ENCODE measurements at regions of chr6 and their contacts with region 1.

Region 1: GRCh38 chr6:21593412-21593926 is at the start of gene SOX4:
- DNase-seq: peak; percentile 95 to 98 (median 97)
- H3K4me3 ChIP-seq: peak within 1 kb of the TSS; percentile 85
- H3K27ac ChIP-seq: peak within 1 kb of the TSS; percentile 83 to 87
- H3K4me1 ChIP-seq: no peaks in the 10 kb centered on the region
- H3K27me3 ChIP-seq: no peaks in the 10 kb centered on the region
- CTCF ChIP-seq: no peak
- EP300 ChIP-seq: no peak
- POLR2A ChIP-seq: peak; percentile 81
- total RNA-seq, gene SOX4: 34.4 to 78.3 (median 53.5) TPM

Region 2: DNA sequence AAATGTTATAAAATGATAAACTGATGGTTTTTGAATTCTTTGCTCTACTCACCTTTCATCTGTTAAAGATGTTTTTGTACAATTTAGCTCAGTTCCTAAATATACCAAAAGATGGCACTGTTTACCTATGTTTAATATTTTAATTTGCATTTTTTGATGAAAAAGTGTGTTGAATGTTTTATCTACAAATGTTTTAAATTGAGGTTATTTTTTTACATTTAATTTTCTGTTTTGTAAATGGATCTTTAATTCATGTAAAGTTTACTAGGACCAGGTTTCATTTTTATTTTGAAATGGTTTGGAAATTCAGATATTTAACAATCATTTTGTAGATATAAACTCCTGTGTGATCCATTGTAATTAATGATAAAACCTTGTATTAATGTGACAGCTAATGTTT is 1029.2 kb before region 1 on chr6:
- intact Hi-C with region 1: loop called in 3 of 4 experiments (anchors 5 to 10 kb)
- DNase-seq: no peak
- H3K4me3 ChIP-seq: no peak overlapping the region
- H3K27ac ChIP-seq: no peak overlapping the region
- H3K4me1 ChIP-seq: peaks cover 1% of the 10 kb centered on the region
- H3K27me3 ChIP-seq: no peaks in the 10 kb centered on the region
- CTCF ChIP-seq: peak in 2 of 3 donors; percentile 16 to 47
- EP300 ChIP-seq: no peak
- POLR2A ChIP-seq: no peak

Region 3: GRCh38 chr6:20791944-20792343 is 801.5 kb before region 1 on chr6:
- intact Hi-C with region 1: loop called in 1 of 4 experiments (anchors 5 kb)
- DNase-seq: no peak
- H3K4me3 ChIP-seq: no peak overlapping the region
- H3K27ac ChIP-seq: no peak overlapping the region
- H3K4me1 ChIP-seq: no peaks in the 10 kb centered on the region
- H3K27me3 ChIP-seq: no peaks in the 10 kb centered on the region
- CTCF ChIP-seq: no peak
- EP300 ChIP-seq: no peak
- POLR2A ChIP-seq: no peak

Region 4: DNA sequence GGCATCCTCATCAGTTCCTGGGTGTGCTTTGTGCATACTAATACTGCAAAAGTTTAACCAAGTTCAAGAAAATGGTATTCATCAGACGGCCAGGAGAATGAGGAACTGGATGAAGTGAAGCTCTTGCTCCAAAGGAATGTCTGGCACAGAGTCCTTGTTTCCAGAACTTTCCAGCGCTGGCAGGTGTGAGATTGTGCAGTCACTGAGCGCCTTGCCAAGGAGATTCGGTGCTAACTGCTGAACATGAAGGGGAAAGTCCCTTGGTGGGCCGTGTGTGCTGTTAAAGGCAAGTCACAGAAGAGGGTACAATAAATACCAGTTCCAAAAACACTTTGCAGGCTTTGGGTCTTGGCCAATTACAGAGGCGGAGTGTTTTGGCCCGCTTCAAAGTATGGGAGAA is 262.2 kb before region 1 on chr6:
- intact Hi-C with region 1: loop called in 1 of 4 experiments (anchors 10 kb)
- DNase-seq: peak in 4 of 5 donors; percentile 33 to 65 (median 49)
- H3K4me3 ChIP-seq: no peak overlapping the region
- H3K27ac ChIP-seq: no peak overlapping the region
- H3K4me1 ChIP-seq: peaks cover 5% of the 10 kb centered on the region
- H3K27me3 ChIP-seq: no peaks in the 10 kb centered on the region
- CTCF ChIP-seq: no peak
- EP300 ChIP-seq: no peak
- POLR2A ChIP-seq: no peak

Region 5: GRCh38 chr6:21664314-21665109 is 71.0 kb after region 1 on chr6:
- intact Hi-C with region 1: loop called in 2 of 4 experiments (anchors 2 to 5 kb)
- DNase-seq: peak; percentile 67 to 82 (median 77)
- H3K4me3 ChIP-seq: peak overlapping the region; percentile 76
- H3K27ac ChIP-seq: peak overlapping the region; percentile 70 to 83
- H3K4me1 ChIP-seq: no peaks in the 10 kb centered on the region
- H3K27me3 ChIP-seq: no peaks in the 10 kb centered on the region
- CTCF ChIP-seq: peak in 1 of 3 donors; percentile 7
- EP300 ChIP-seq: no peak
- POLR2A ChIP-seq: no peak

Region 6: DNA sequence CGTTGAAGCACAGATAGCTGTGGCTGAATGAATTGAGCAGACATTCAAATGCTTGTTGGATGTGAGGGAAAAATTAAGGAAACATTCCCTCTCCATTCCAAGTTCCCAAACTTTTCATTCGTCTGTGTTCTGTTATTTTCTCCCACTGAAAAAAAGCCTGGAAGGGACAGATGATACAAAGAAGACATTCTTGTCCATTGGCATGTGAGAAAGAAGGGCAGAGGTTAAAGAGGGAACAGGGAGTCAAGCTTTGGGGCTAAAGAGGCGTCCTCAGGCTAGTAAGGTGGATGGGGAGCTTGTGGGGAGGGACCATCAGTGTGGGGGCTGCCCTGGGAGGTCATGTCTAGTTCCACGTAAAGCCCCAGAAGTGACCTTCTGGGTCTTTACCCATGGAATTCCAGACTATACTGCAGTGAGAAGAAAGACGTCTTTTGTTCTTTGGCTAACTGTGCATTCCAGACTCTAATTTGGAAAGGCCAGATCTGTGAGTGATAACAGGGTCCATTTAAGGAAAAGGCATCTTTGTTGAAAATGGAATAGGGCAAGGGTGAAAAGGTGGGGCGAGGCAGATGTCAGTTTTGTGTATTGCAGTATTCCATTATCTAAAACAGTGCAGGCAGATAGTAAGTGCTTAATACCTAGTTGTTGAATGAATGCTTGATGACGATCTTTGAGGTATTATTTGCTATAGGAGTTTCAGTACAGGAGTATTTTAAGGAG is 117.6 kb after region 1 on chr6:
- intact Hi-C with region 1: no loop called
- DNase-seq: no peak
- H3K4me3 ChIP-seq: no peak overlapping the region
- H3K27ac ChIP-seq: no peak overlapping the region
- H3K4me1 ChIP-seq: peaks cover 7% of the 10 kb centered on the region
- H3K27me3 ChIP-seq: no peaks in the 10 kb centered on the region
- CTCF ChIP-seq: no peak
- EP300 ChIP-seq: no peak
- POLR2A ChIP-seq: no peak

Region 7: GRCh38 chr6:21885532-21886114 is 292.2 kb after region 1 on chr6:
- intact Hi-C with region 1: loop called in 1 of 4 experiments (anchors 5 kb)
- DNase-seq: peak; percentile 43 to 60 (median 55)
- H3K4me3 ChIP-seq: no peak overlapping the region
- H3K27ac ChIP-seq: peak overlapping the region in 1 of 2 donors; percentile 61
- H3K4me1 ChIP-seq: peaks cover 17% of the 10 kb centered on the region
- H3K27me3 ChIP-seq: no peaks in the 10 kb centered on the region
- CTCF ChIP-seq: no peak
- EP300 ChIP-seq: no peak
- POLR2A ChIP-seq: no peak

Region 8: DNA sequence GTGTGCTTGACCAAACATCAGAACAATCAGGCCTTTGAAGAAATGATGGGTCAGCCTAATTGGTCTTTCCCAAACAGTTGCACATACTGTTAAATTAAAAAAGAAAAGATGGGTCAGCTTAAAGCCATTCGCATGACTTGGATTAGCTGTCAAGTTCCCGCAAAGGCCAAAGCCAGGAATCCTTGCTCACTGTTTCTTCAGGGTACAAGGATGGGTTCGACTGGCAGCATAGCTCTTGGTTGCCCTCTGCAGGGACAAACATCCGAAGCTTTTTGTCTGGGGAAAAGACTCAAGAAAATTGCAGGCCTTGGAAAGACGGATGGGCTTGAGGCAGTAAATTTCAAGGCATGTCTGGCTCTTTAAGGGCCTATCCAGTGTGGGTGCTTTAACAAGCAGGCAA is 1143.9 kb after region 1 on chr6:
- intact Hi-C with region 1: loop called in 1 of 4 experiments (anchors 10 kb)
- DNase-seq: peak; percentile 17 to 67 (median 63)
- H3K4me3 ChIP-seq: no peak overlapping the region
- H3K27ac ChIP-seq: no peak overlapping the region
- H3K4me1 ChIP-seq: peaks cover 4% of the 10 kb centered on the region
- H3K27me3 ChIP-seq: no peaks in the 10 kb centered on the region
- CTCF ChIP-seq: peak in 2 of 3 donors; percentile 34 to 54
- EP300 ChIP-seq: no peak
- POLR2A ChIP-seq: no peak